Heart left ventricle (tissue), 16 donors: ENCODE measurements at regions of chr14 and their contacts with region 1.

Region 1: DNA sequence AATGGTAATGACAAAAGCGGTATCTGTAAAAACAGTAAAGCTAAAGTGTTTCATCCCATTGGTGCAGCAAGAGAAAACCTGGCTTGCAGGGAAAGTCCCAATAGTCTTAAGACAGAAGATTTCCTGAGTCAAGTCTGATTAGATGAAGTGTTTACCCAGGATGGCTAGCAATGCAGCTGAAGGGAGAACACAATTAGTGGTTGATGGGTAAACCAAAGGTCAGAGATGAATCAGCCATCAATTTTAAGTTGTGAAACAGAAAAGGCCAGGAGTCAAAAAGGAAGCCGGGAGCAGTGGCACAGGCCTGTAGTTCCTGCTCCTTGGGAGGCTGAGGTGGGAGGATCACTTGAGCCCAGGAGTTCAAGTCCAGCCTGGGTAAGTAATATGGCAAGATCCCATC is 52.6 kb downstream of the SEC23A start:
- DNase-seq: no peak
- ATAC-seq: no peak
- H3K4me3 ChIP-seq: no peak overlapping the region
- H3K27ac ChIP-seq: no peak overlapping the region
- H3K4me1 ChIP-seq: peaks cover 0 to 6% (median 0%) of the 10 kb centered on the region in 12 donors
- H3K27me3 ChIP-seq: no peaks in the 10 kb centered on the region
- CTCF ChIP-seq: no peak
- POLR2A ChIP-seq: no peak

Region 2: GRCh38 chr14:39005044-39005880 is 45.1 kb before region 1 on chr14:
- intact Hi-C with region 1: no loop called
- DNase-seq: peak in 3 of 5 donors; percentile 32 to 64 (median 40)
- ATAC-seq: peak; percentile 51 to 94 (median 86)
- H3K4me3 ChIP-seq: no peak overlapping the region
- H3K27ac ChIP-seq: peak overlapping the region in 2 of 12 donors; percentile 13 to 17
- H3K4me1 ChIP-seq: peaks cover 0 to 6% (median 0%) of the 10 kb centered on the region in 12 donors
- H3K27me3 ChIP-seq: no peaks in the 10 kb centered on the region
- CTCF ChIP-seq: no peak
- POLR2A ChIP-seq: no peak

Region 3: DNA sequence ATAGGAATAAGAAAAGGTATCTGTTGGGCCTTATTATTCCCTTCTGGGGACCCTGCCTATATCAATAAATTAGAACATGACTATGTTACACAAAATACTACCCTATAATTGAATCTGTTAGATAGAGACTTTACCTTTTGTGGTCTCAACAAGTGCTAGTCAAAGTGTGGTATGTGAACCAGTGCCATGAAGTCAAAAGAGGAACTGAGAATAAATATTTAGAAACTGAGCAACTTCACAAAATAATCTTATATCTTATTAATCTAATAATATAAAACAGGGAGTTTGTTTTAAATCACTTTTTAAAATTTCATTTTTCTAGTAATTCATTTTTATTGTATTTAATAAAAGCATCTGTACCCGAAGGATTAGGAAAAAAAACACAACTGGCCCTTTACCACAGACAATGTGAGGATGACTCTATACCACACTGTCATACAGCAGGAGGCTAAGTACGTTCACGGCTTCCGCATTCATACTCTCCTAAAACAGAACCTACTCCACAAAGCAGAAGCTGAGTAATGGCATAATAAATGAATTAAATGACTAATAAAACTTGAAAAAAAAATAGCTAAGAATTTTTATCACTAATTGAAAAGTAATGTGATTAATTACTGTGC is 10.5 kb after region 1 on chr14:
- intact Hi-C with region 1: loop called in 1 of 10 experiments (anchors 2 kb)
- DNase-seq: no peak
- ATAC-seq: no peak
- H3K4me3 ChIP-seq: no peak overlapping the region
- H3K27ac ChIP-seq: no peak overlapping the region
- H3K4me1 ChIP-seq: no peaks in the 10 kb centered on the region
- H3K27me3 ChIP-seq: no peaks in the 10 kb centered on the region
- CTCF ChIP-seq: no peak
- POLR2A ChIP-seq: no peak